HEK293 (cell line): ENCODE measurements at regions of chr15 and their contacts with region 1.

Region 1: DNA sequence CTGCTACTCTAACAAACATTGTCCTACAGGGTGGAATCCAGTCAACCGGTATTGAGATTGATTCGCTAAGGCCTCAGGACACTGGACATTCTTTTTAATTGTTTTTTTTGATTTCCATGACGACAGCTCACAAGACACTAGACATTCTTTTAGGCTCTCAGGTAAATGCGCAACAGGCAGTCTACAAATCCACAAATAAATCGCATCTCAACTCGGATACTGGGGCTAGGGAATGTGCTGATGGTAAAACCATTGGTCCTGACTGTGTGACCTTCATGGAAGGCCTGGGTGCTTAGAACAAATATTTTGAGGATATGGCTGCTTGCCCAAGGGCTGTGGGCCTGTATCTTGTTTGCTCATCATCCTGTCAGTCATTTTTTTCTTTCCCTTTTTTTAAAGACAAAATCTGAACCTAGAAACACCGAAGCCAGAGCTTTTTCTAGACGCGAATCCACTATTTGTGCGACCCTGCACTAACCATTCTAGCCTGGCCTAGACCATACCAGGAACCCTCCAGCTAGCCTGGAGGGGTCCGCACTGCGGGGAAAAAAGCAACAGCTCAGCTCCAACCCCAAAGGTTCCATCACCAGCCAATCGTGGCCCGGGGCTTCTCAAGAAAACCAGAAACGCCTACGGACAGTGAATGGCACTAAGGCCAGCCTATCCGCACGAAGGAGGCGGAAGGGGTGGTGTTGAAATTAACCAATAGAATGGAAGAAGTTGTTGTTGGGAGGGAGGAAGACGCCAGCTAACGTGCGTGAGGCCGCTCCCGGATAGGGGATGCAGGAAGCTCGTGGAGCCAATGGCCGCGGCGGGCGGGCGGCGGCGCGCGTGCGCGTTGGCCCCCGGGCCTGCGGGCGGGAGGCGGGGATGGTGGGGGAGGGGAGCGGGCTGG is 18.1 kb upstream of the CHD2 start:
- H3K4me3 ChIP-seq: peak overlapping the region; percentile 27; the same call in 1 of the 2 replicates
- H3K27ac ChIP-seq: peak overlapping the region; percentile 99
- H3K4me1 ChIP-seq: peaks cover 23% of the 10 kb centered on the region
- CTCF ChIP-seq: no peak

Region 2: GRCh38 chr15:92797168-92797951 is 84.7 kb before region 1 on chr15:
- CTCF ChIA-PET with region 1: interaction called, 13 read pairs
- POLR2A ChIA-PET with region 1: interaction called, 20 read pairs
- H3K4me3 ChIP-seq: no peak overlapping the region
- H3K27ac ChIP-seq: peak overlapping the region; percentile 18; the same call in 1 of the 2 replicates
- H3K4me1 ChIP-seq: no peaks in the 10 kb centered on the region
- CTCF ChIP-seq: 0 out of 2 replicates have a peak, but pooled peaks have one; percentile 48

Region 3: DNA sequence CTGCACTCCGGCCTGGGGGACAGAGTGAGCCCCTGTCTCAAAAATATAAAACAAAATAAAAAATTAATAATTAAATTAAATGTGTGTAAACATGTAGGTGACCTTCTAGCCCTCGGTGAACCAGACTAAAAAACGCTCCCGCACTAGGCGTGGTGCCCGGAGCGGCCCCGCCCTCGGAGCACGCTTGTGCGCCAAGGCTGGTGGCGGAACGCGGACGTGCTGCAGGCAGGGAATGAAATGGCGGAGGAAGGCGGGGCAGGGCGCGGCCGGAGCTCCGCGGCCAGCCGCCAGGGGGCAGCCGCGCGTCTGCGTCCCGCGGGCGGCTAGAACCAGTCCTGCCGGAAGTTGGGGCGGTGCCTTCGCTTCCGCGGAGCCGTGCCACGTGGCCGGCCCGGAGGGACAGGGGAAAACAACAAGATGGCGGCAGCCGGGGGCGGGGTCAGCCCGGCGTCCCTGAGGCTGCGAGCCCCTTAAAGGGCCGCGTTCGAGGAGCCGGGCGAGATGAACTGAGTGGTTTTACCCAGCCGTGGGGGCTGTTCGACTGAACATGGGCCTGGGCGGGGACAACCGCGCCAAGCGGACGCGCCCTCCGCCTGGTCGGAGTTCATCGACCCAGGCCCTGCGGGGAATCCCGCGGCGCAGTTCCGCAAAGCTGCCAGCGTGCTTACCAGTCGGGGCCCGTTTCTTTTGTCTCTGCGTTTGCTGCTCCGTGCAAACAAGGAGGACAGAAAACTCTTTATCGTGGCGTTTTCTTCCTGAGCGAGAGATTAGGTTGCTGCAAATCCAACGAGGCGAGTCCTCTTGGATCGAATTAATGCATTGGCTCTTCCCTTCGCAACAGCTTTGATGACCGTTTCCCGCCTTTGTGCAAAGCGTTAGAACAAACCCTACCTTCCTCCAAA is 72.8 kb before region 1 on chr15:
- CTCF ChIA-PET with region 1: interaction called, 15 read pairs
- POLR2A ChIA-PET with region 1: interaction called, 280 read pairs
- H3K4me3 ChIP-seq: peak overlapping the region; percentile 48
- H3K27ac ChIP-seq: peak overlapping the region; percentile 97
- H3K4me1 ChIP-seq: peaks cover 28% of the 10 kb centered on the region
- CTCF ChIP-seq: peak; percentile 93; the same call in 1 of the 2 replicates

Region 4: DNA sequence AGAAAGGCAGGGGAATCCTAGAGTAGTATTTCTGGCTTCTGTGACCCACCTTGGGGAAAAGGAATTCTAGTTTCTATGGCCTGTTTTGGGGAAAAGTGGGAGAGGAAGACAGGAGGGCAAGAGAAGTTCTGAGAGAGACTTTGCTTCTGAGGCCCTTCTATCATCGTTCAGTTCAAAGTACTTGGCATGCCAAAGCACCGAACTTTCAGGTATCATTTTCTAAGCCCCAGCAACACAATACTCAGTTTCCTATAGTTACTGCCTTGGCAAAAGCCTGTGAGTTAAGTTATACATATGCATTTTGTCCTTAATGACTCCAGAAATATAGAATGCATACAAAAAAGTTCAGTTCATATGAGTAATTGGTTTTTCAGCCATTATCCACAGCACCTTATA is 56.1 kb before region 1 on chr15:
- CTCF ChIA-PET with region 1: interaction called, 4 read pairs
- POLR2A ChIA-PET with region 1: interaction called, 238 read pairs
- H3K4me3 ChIP-seq: no peak overlapping the region
- H3K27ac ChIP-seq: no peak overlapping the region
- H3K4me1 ChIP-seq: peaks cover 31% of the 10 kb centered on the region
- CTCF ChIP-seq: no peak

Region 5: GRCh38 chr15:92845126-92845508 is 36.9 kb before region 1 on chr15:
- CTCF ChIA-PET with region 1: no interaction called
- POLR2A ChIA-PET with region 1: interaction called, 12 read pairs
- H3K4me3 ChIP-seq: no peak overlapping the region
- H3K27ac ChIP-seq: no peak overlapping the region
- H3K4me1 ChIP-seq: peaks cover 7% of the 10 kb centered on the region; the same call in 1 of the 2 replicates
- CTCF ChIP-seq: no peak

Region 6: DNA sequence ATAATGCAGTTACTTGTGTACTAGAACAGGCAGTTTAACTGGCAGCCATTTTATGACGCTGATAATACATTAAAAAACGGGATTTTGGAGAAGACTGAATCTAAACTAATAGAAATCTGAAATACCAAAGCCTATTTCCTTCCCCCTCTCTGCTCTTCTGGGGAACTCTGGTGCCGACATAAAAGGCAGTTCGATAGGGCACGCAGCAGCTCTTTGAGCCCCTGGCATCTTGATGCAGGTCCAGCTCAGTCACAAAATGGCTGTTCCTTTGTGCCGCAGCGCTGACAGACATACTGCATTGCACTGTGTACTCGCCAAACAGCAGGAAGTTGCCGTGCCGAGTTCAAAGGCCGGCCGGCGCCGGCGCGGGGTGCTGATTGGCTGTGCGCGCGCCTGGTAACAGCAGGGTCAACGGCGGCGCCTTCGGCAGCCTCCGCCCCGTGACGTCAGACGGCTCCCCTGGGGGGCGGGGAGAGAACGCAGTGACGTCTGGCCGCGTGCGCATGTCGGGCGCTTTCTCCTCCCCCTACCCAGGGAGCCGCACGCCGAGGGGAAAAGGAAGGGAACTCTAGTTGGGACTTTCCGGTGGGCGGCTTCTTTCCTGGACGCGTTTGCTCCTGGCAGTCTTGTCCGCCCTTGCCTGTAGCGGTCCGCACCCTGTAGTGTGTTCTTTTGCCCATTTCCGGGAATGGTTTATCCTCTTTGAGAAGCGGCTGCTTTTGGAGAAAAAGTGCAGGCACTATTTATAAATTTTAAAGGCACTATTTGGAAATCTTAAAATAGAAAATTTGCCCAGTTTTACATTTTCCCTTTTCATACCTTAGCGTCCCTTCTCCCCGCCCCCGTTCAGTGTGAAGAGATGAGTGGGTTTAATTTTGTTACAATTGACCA is 22.1 kb after region 1 on chr15:
- CTCF ChIA-PET with region 1: interaction called, 10 read pairs
- POLR2A ChIA-PET with region 1: interaction called, 226 read pairs
- H3K4me3 ChIP-seq: peak overlapping the region; percentile 82
- H3K27ac ChIP-seq: peak overlapping the region; percentile 95
- H3K4me1 ChIP-seq: peaks cover 49% of the 10 kb centered on the region
- CTCF ChIP-seq: no peak

Region 7: GRCh38 chr15:93007994-93008393 is 125.9 kb after region 1 on chr15:
- CTCF ChIA-PET with region 1: no interaction called
- POLR2A ChIA-PET with region 1: no interaction called
- H3K4me3 ChIP-seq: no peak overlapping the region
- H3K27ac ChIP-seq: no peak overlapping the region
- H3K4me1 ChIP-seq: no peaks in the 10 kb centered on the region
- CTCF ChIP-seq: no peak

Region 8: GRCh38 chr15:93035953-93036800 is 154.1 kb after region 1 on chr15:
- CTCF ChIA-PET with region 1: no interaction called
- POLR2A ChIA-PET with region 1: no interaction called
- H3K4me3 ChIP-seq: no peak overlapping the region
- H3K27ac ChIP-seq: no peak overlapping the region
- H3K4me1 ChIP-seq: no peaks in the 10 kb centered on the region
- CTCF ChIP-seq: peak; percentile 87